Activated CD8-positive, alpha-beta T cell treated with anti-CD3 and anti-CD28 coated beads, Interleukin-2, amount 10 ng/mL, durations not matched to agents 7 days and 5 days (primary cell): ENCODE measurements at regions of chr6 and their contacts with region 1.

Region 1: GRCh38 chr6:106339334-106340029 is 13.9 kb upstream of the ATG5 start:
- DNase-seq: peak; percentile 60
- ATAC-seq: peak; percentile 92
- H3K4me3 Mint-ChIP-seq: peak overlapping the region; percentile 19
- H3K27ac Mint-ChIP-seq: no peak overlapping the region
- H3K4me1 Mint-ChIP-seq: peaks cover 5% of the 10 kb centered on the region
- H3K27me3 Mint-ChIP-seq: peaks cover 28% of the 10 kb centered on the region

Region 2: DNA sequence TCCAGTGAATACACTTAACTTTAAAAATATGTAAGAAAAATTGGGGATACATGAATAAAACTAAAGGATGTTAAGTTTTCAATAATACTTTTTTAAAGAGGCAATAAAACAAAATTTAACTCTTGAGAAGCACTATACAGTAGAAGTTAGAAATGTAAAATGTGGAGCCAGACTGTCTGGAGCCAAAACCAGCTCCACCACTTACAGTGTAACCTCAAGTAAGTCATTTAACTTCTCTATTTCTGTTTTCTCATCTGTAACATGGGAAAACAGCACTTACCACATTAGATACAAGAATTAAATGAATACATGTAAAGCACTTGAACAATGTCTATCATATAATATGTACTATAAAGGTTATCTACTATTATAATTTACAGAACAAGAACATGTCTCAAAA is 20.6 kb before region 1 on chr6:
- CTCF ChIA-PET with region 1: interaction called, 10 read pairs
- POLR2A ChIA-PET with region 1: no interaction called
- DNase-seq: no peak
- ATAC-seq: no peak
- H3K4me3 Mint-ChIP-seq: no peak overlapping the region
- H3K27ac Mint-ChIP-seq: no peak overlapping the region
- H3K4me1 Mint-ChIP-seq: peaks cover 38% of the 10 kb centered on the region
- H3K27me3 Mint-ChIP-seq: no peaks in the 10 kb centered on the region

Region 3: DNA sequence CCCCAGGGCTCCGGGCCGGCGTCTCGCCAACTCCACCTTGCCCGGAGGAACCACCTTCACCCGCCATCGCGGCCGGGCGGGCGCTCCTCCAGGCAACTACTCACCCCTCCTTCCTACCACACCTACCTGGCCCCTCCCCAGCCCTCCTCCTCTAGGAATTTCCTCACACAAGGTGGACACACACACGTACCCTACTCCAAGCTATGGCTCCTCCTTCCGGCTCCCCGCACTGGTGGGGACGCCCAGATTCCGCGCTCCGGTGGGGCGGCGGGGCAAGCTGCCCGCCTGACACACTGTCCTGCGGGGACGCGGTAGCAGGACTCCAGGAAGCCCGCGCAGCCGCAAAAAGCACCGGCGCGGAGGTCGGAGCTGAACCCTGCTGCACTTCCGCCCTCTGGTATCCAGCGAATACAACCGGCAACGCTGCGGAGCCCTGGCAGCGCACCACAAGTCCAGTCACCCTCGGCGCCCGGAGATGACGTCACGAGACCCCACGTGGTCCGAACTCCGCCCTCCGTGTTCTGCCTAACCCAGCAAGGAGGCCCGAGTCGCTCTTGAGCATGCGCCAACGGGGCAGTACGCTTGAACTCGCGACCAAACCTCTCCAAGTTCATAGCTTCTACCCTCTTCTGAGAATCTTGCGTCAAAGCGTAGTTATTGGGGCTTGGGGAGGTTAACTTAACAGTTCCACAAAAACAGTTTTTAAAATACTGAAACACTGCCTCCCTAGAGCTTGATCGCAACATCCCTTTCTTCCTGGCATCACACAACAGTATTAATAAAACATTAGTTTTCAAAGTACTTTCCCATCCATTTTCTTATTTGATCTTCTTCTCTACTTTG is 13.9 kb before region 1 on chr6 and contains the start of gene ATG5:
- CTCF ChIA-PET with region 1: interaction called, 13 read pairs
- POLR2A ChIA-PET with region 1: interaction called, 3 read pairs
- DNase-seq: peak; percentile 100
- ATAC-seq: peak; percentile 94
- H3K4me3 Mint-ChIP-seq: peak within 1 kb of the TSS; percentile 100
- H3K27ac Mint-ChIP-seq: peak within 1 kb of the TSS; percentile 99
- H3K4me1 Mint-ChIP-seq: peaks cover 35% of the 10 kb centered on the region
- H3K27me3 Mint-ChIP-seq: peaks cover 25% of the 10 kb centered on the region
- total RNA-seq, gene ATG5: 31.6 to 36.0 TPM

Region 4: GRCh38 chr6:106439446-106439845 is 100.0 kb after region 1 on chr6:
- CTCF ChIA-PET with region 1: interaction called, 10 read pairs
- POLR2A ChIA-PET with region 1: no interaction called
- DNase-seq: no peak
- ATAC-seq: no peak
- H3K4me3 Mint-ChIP-seq: no peak overlapping the region
- H3K27ac Mint-ChIP-seq: no peak overlapping the region
- H3K4me1 Mint-ChIP-seq: peaks cover 6% of the 10 kb centered on the region
- H3K27me3 Mint-ChIP-seq: peaks cover 42% of the 10 kb centered on the region

Region 5: GRCh38 chr6:106979427-106979884 is 640.0 kb after region 1 on chr6:
- CTCF ChIA-PET with region 1: interaction called, 15 read pairs
- POLR2A ChIA-PET with region 1: no interaction called
- DNase-seq: peak; percentile 84
- ATAC-seq: peak; percentile 80
- H3K4me3 Mint-ChIP-seq: no peak overlapping the region
- H3K27ac Mint-ChIP-seq: no peak overlapping the region
- H3K4me1 Mint-ChIP-seq: peaks cover 7% of the 10 kb centered on the region
- H3K27me3 Mint-ChIP-seq: peaks cover 26% of the 10 kb centered on the region